Activated naive CD4-positive, alpha-beta T cell treated with anti-CD3 and anti-CD28 coated beads for 36 hours (primary cell): ENCODE measurements at regions of chr12 and their contacts with region 1.

Region 1: GRCh38 chr12:111298582-111299436 is 70.1 kb downstream of the PHETA1 start:
- DNase-seq: peak; percentile 62
- H3K4me3 Mint-ChIP-seq: no peak overlapping the region
- H3K27ac Mint-ChIP-seq: no peak overlapping the region
- H3K4me1 Mint-ChIP-seq: no peaks in the 10 kb centered on the region
- H3K27me3 Mint-ChIP-seq: no peaks in the 10 kb centered on the region

Region 2: DNA sequence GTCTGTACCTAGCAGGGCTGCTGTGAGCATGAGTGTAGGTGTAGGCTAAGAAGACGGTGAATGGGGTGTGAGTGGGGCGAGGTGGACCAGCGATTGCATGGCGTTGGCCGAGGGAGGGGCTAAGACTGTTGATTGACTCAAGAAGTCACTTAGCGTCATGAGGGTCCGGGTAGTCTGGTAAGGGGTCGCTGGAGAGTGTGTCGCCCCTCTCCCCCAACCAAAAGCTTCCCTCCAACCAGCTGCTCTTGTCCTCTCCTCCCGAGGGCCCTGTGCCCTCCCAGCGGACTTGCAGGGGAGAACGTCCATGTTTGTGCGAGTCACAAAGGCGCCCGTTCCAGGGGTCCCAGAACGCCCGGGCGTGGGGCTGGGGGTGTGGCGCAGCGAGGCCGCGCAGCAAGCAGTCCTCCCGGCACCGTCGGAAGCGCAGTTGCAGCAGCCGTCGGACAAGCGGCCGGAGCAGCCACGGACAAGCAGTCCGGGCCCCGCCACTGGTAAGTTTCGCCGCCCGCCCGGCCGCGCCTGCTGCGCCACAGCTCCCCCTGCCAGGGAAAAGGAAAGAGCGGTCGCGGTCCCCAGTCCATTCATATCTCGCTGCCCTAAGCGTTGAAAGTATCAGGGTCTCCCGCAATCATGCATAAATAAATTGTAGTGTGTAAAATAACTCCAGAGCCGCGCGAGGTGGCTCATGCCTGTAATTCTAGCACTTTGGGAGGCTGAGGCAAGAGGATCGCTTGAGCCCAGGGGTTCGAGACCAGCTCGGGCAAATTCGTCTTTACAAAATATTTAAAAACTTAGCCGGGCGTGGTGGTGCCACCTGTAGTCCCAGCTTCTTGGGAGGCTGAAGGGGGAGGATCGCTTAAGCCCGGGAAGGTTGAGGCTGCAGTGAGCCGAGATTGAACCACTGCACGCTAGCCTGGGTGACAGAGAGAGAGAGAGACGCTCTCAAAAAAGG is 451.9 kb before region 1 on chr12 and contains the start of gene CCDC63:
- CTCF ChIA-PET with region 1: no interaction called
- intact Hi-C with region 1: no loop called
- DNase-seq: peak; percentile 44
- H3K4me3 Mint-ChIP-seq: peak within 1 kb of the TSS; percentile 58
- H3K27ac Mint-ChIP-seq: no peak within 1 kb of the TSS
- H3K4me1 Mint-ChIP-seq: peaks cover 8% of the 10 kb centered on the region
- H3K27me3 Mint-ChIP-seq: peaks cover 25% of the 10 kb centered on the region
- total RNA-seq, gene CCDC63: not detected

Region 3: GRCh38 chr12:111251058-111251730 is 47.6 kb before region 1 on chr12:
- CTCF ChIA-PET with region 1: no interaction called
- intact Hi-C with region 1: no loop called
- DNase-seq: no peak
- H3K4me3 Mint-ChIP-seq: no peak overlapping the region
- H3K27ac Mint-ChIP-seq: no peak overlapping the region
- H3K4me1 Mint-ChIP-seq: no peaks in the 10 kb centered on the region
- H3K27me3 Mint-ChIP-seq: no peaks in the 10 kb centered on the region

Region 4: GRCh38 chr12:111268738-111269572 is 29.9 kb before region 1 on chr12:
- CTCF ChIA-PET with region 1: interaction called, 19 read pairs
- intact Hi-C with region 1: no loop called
- DNase-seq: peak; percentile 35
- H3K4me3 Mint-ChIP-seq: no peak overlapping the region
- H3K27ac Mint-ChIP-seq: no peak overlapping the region
- H3K4me1 Mint-ChIP-seq: peaks cover 1% of the 10 kb centered on the region
- H3K27me3 Mint-ChIP-seq: no peaks in the 10 kb centered on the region

Region 5: GRCh38 chr12:111377440-111377839 is 78.6 kb after region 1 on chr12:
- CTCF ChIA-PET with region 1: no interaction called
- intact Hi-C with region 1: no loop called
- DNase-seq: no peak
- H3K4me3 Mint-ChIP-seq: no peak overlapping the region
- H3K27ac Mint-ChIP-seq: no peak overlapping the region
- H3K4me1 Mint-ChIP-seq: no peaks in the 10 kb centered on the region
- H3K27me3 Mint-ChIP-seq: peaks cover 1% of the 10 kb centered on the region